Dorsolateral prefrontal cortex (tissue), 120 donors: ENCODE measurements at regions of chr17 and their contacts with region 1.

Region 1: DNA sequence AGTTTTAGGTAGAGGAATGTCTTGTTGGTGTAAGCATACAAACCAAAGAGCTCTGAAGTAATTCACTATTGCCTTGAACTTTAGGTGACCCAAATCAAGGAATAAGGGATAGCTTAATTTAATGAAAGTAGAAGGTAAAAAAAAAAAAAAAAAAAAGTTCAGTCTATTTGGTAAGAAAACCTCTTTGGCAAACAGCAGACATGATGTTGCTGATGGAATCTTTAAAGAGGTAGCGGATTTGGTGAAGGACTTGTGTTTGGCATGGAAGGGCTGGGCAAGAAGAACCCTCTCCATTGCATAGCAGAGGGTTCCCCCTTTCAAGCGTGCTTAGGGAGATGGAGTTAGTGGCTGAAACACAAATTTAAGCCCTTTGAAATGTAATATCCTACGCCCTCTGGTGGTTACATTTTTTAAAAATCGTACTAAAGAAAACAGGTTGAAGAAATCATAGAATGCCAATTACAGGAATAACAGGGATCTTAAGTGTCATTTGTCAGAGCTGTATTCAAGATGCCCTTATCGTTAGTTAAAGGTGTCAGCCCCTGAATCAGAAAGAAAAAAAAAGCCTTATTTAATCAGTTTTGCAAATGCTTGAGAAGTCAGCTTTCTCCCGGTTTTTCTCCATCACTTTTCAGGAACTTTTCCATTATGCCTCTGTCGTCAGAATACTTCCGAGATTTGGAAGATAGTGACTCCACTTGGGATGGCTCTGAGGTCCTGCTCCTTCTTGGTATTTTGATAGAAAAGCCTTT is 383.1 kb downstream of the KCNJ2 start:
- DNase-seq: no peak
- H3K4me3 ChIP-seq: peak overlapping the region in 26 of 59 donors; percentile 3 to 50 (median 26)
- H3K27ac ChIP-seq: peak overlapping the region in 57 of 59 donors; percentile 9 to 93 (median 80)
- H3K27me3 ChIP-seq: no peaks in the 10 kb centered on the region
- CTCF ChIP-seq: peak; percentile 66 to 90 (median 79)

Region 2: DNA sequence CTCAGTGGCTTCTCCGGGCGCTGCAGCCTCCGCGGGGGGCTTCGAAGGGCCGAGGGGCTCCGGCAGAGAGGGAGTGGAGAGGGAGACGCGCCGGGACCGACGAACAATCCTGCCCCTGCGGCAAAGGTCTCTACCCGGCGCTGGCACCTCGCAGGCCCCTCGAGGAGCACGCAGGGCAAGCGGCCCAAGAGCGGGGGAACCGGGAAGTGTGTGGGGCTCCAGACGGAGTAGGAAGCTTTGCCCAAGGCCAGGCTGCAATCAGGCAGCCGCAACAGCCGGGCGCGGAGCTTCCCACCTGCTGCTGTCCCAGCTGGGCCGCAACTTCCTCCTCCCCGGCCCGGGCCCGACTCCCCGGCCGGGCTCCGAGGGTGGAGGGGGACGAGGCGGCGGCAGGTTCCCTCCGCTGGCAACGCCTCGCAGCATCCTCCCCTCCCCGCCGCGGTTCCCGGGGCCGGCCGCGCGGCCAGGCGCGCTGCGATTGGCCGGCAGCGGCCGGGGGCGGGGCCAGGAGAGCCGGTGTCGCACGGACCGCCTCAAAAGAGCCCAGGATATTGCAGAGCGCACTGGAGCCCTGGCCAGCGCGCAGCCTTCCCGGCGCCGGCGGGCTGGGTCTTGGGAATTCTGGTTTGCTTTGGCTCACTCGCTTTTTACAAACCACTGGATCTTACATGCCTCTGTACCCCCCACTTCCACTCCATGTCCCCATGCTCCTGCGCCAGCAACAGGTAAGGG is 383.3 kb before region 1 on chr17 and contains the start of gene KCNJ2:
- intact Hi-C with region 1: loop called (anchors 5 to 10 kb)
- DNase-seq: peak; percentile 43 to 94 (median 89)
- H3K4me3 ChIP-seq: peak within 1 kb of the TSS; percentile 59 to 96 (median 83)
- H3K27ac ChIP-seq: peak within 1 kb of the TSS; percentile 85 to 99 (median 95)
- H3K27me3 ChIP-seq: no peaks in the 10 kb centered on the region
- CTCF ChIP-seq: peak in 13 of 56 donors; percentile 1 to 34 (median 7)
- total RNA-seq, gene KCNJ2: 7.8 to 66.9 (median 21.8) TPM

Region 3: DNA sequence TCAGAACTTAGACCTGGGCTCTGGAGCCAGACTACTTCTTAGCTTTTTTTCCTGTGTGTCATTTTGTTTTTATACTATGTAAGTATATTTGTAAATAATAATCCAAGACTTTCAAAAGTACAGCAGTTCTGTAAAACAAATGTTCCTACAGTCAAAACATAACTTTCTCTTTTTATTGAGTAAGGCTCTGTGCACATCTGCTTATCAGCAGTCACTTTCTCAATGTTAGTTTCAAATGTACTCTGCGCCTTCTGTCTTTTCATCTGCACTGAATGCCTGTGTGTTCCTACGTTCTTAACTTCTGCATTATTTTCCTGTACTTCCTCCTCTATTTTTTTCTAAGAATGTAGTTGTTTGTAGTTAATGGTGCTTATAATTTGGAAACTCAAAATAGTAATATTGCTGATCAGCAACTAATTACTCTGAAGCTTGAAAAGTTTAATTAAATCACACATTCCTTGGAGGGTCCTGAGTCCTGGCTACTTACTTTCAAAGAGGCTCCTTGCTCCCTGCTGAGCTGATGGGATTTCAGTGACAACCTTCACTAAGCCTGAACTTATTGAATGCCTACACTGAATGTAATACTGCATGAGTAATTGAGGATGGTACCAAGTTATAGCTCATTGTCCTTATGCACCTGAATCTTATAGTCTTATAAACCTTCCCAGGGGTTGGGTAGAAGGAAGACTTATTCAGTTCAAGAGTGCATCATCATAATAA is 53.2 kb before region 1 on chr17:
- intact Hi-C with region 1: loop called in 1 of 2 experiments (anchors 10 kb)
- DNase-seq: no peak
- H3K4me3 ChIP-seq: no peak overlapping the region
- H3K27ac ChIP-seq: peak overlapping the region in 8 of 59 donors; percentile 14 to 53 (median 21)
- H3K27me3 ChIP-seq: no peaks in the 10 kb centered on the region
- CTCF ChIP-seq: no peak

Region 4: DNA sequence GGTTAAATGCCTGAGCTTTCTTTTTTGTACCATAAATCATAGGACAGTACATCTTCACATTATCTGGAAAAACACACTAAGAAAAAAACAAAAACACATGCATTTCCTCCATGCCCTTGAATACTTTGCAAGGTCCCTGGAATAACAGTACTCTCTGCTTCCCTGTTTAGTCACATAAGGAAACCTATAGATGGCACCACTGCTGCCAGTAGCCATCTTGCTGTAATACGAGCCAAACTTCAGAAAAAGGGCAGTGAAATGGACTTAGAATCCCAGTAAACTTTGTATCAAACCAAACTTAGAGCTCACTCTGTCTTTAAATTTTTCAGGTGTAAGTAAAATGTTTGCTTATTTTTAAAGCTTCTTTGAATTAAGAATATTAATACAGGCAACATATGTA is 52.4 kb after region 1 on chr17:
- intact Hi-C with region 1: loop called in 1 of 2 experiments (anchors 10 kb)
- DNase-seq: no peak
- H3K4me3 ChIP-seq: no peak overlapping the region
- H3K27ac ChIP-seq: peak overlapping the region in 56 of 59 donors; percentile 8 to 100 (median 97)
- H3K27me3 ChIP-seq: no peaks in the 10 kb centered on the region
- CTCF ChIP-seq: no peak

Region 5: DNA sequence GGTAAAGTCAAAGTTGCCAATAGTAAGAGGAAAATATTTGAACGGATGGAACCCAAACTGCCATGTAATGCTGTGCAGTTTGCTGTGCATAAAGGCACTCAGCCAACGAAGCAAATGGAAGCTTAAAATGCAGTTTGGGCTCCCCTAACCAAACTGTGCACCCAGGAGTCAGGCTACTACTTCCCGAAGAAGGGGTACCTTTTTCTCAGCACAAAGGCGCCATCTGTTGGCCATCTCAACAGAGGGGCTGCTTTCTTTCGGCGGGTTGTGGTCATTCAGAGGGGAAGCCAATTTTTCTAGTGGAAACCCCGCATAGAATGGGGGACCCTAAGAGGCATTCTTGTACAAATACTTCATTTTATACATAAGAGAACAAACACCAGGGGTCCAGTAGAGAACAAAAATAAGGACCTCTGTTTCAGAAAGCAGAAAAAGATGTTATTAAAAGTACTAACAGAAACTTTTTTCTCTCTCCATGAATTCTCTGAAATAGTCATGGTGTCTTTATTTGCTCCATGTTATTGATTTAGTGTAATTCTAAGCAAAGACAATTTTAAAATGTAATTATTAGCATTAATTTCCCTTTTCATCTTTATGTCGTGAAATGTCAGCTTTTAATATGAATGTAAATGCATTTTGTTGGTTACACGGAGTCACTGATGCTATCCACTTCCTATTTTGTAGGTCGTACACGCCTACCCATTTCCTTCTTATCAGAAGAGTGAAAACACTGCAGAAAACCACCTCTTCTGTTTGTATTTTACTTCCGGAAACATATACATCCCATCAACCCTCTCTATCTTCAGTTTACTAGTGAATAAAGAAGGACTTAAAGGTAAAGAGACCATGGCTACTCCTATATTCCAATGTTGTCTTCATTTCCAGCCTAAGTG is 70.2 kb after region 1 on chr17:
- intact Hi-C with region 1: loop called in 1 of 2 experiments (anchors 5 kb)
- DNase-seq: peak; percentile 14 to 87 (median 76)
- H3K4me3 ChIP-seq: peak overlapping the region in 36 of 59 donors; percentile 1 to 53 (median 24)
- H3K27ac ChIP-seq: peak overlapping the region; percentile 2 to 93 (median 84)
- H3K27me3 ChIP-seq: no peaks in the 10 kb centered on the region
- CTCF ChIP-seq: peak; percentile 43 to 95 (median 79)

Region 6: GRCh38 chr17:71423871-71424546 is 871.6 kb after region 1 on chr17:
- intact Hi-C with region 1: no loop called
- DNase-seq: no peak
- H3K4me3 ChIP-seq: no peak overlapping the region
- H3K27ac ChIP-seq: no peak overlapping the region
- H3K27me3 ChIP-seq: no peaks in the 10 kb centered on the region
- CTCF ChIP-seq: no peak